Heart left ventricle (tissue), 16 donors: ENCODE measurements at regions of chr1 and their contacts with region 1.

Region 1: DNA sequence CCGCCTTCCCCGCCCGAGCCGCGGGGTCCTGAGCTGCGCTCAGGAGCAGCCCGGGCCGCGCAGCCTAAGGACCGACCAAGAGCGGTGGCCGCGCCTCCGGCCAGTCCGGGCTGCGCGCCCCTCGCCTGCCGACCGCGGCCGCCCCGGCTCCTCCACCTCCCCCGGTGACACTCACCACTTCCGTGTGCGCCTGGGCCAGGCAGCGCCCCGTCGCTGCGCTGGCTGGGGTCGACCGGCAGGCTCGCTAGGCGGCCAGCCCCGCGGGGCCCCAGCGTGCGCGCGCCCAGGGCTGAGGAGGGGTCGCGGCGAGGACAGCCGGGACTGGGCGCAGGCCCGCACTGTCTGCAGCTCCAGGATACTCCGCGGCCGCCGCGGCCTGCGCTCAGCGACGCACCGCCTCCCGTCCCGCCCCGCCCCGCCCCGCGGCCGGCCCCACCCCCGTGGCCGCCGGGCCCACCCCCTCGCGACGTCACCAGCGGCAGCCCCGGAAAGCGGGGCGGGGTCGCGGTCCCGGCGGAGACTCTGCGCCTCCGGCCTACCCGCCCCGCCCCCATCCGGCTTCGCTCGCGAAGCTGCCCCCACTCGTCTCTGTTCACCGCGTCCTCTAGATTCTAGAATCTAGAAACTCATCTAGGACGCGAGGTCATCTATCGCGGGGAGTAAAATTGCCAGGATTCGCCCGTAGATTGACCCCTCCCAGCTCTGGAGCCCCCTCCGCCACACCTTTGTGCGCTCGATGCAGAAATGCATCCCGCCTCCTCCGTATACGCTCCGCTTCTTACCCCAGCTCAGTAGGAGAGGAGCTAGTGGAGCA is at the start of gene JAK1:
- DNase-seq: peak; percentile 93 to 96 (median 94)
- ATAC-seq: peak; percentile 76 to 97 (median 94)
- H3K4me3 ChIP-seq: peak within 1 kb of the TSS; percentile 83 to 100 (median 96)
- H3K27ac ChIP-seq: peak within 1 kb of the TSS; percentile 92 to 100 (median 96)
- H3K4me1 ChIP-seq: peaks cover 0 to 46% (median 32%) of the 10 kb centered on the region in 12 donors
- H3K27me3 ChIP-seq: no peaks in the 10 kb centered on the region
- CTCF ChIP-seq: peak in 1 of 12 donors; percentile 22
- POLR2A ChIP-seq: peak; percentile 56 to 97
- total RNA-seq, gene JAK1: 85.6 to 189 (median 96.5) TPM

Region 2: DNA sequence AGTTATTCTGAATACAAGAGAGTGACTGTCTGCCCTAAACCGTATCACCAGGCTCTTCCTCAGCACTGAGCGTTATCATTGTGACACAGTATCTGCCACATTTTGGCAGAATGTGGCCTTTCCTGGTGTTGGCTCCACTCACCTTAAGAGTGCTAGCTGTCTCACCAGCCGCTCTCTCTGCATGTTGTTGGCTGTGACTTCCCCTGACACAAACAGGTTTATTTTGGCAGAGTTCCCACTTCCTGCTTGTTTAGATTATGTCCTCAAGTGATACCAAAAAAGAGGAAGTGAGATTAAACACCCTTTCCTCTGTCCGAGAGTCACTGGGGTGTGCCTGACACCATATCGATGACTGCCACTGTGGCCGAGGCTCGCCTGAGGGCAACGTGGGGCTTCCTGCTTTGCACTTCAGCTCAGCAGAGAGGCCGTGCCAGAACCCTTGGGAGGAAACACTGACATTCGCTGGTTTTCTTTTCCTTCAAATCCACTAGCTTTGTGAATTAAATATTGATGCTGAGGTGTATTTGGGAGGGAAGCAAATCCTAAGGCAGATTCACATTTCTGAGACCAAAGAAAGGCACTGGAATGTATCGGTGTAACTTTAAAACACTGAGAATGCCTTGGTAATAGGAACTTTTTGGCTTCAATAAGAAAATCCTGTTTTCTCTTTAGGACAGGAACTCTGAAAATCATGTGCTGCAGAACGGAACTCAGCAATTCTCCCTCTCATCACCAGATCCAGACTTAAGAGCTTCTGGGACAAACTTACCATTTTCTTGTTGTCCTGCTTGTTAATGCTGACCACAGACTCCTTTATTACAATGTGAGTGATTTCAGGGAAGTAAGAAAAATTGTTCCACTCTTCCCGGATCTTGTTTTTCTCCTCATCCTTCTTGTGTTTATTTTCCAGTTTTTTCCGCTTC is 102.1 kb before region 1 on chr1:
- intact Hi-C with region 1: loop called in 2 of 10 experiments (anchors 2 to 10 kb)
- DNase-seq: peak; percentile 63 to 88 (median 77)
- ATAC-seq: peak; percentile 45 to 94 (median 85)
- H3K4me3 ChIP-seq: no peak overlapping the region
- H3K27ac ChIP-seq: peak overlapping the region in 9 of 12 donors; percentile 17 to 85 (median 39)
- H3K4me1 ChIP-seq: peaks cover 0 to 28% (median 5%) of the 10 kb centered on the region in 12 donors
- H3K27me3 ChIP-seq: no peaks in the 10 kb centered on the region
- CTCF ChIP-seq: no peak
- POLR2A ChIP-seq: no peak

Region 3: GRCh38 chr1:64884261-64885040 is 81.9 kb before region 1 on chr1:
- intact Hi-C with region 1: loop called in 3 of 10 experiments (anchors 5 kb)
- DNase-seq: no peak
- ATAC-seq: no peak
- H3K4me3 ChIP-seq: no peak overlapping the region
- H3K27ac ChIP-seq: no peak overlapping the region
- H3K4me1 ChIP-seq: peaks cover 2 to 66% (median 14%) of the 10 kb centered on the region in 12 donors
- H3K27me3 ChIP-seq: no peaks in the 10 kb centered on the region
- CTCF ChIP-seq: no peak
- POLR2A ChIP-seq: no peak

Region 4: DNA sequence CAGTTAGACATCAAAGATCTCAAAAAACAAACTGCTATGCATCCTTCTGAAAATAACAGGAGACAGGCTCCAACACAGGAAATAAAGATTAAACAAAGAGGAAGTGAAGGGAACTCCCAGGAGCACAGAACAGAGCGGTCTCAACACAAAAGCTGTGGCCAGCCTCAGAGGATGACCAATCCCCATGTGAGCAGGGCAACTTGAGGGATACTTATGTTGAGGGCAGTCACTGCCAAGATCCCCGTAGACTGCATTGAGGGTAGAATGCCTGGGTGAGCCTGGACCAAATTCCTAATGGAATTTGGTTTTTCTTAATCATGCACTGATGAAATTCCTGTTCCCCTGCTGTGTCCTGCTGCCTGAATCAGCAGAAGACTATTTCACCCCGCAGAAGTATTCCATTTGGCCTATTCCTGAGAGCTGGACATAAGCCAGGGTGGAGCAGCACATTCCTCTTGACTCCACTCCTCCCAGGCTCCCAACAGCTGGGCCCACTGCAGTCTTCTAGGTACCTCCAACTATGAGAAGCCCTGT is 49.0 kb before region 1 on chr1:
- intact Hi-C with region 1: loop called in 1 of 10 experiments (anchors 2 kb)
- DNase-seq: peak in 4 of 5 donors; percentile 64 to 86 (median 74)
- ATAC-seq: peak; percentile 62 to 93 (median 88)
- H3K4me3 ChIP-seq: no peak overlapping the region
- H3K27ac ChIP-seq: peak overlapping the region in 9 of 12 donors; percentile 13 to 76 (median 31)
- H3K4me1 ChIP-seq: peaks cover 13 to 91% (median 66%) of the 10 kb centered on the region in 12 donors
- H3K27me3 ChIP-seq: no peaks in the 10 kb centered on the region
- CTCF ChIP-seq: no peak
- POLR2A ChIP-seq: no peak

Region 5: GRCh38 chr1:65067491-65068201 is 101.3 kb after region 1 on chr1:
- intact Hi-C with region 1: loop called in 3 of 10 experiments (anchors 2 to 10 kb)
- DNase-seq: peak; percentile 72 to 85 (median 81)
- ATAC-seq: peak; percentile 45 to 63 (median 58)
- H3K4me3 ChIP-seq: peak overlapping the region; percentile 71 to 98 (median 88)
- H3K27ac ChIP-seq: peak overlapping the region; percentile 95 to 100 (median 99)
- H3K4me1 ChIP-seq: peaks cover 0 to 43% (median 31%) of the 10 kb centered on the region in 12 donors
- H3K27me3 ChIP-seq: no peaks in the 10 kb centered on the region
- CTCF ChIP-seq: no peak
- POLR2A ChIP-seq: peak in 1 of 2 donors; percentile 65

Region 6: GRCh38 chr1:65213271-65214023 is 247.1 kb after region 1 on chr1:
- intact Hi-C with region 1: no loop called
- DNase-seq: no peak
- ATAC-seq: peak in 3 of 4 donors; percentile 13 to 37 (median 20)
- H3K4me3 ChIP-seq: no peak overlapping the region
- H3K27ac ChIP-seq: no peak overlapping the region
- H3K4me1 ChIP-seq: peaks cover 0 to 19% (median 11%) of the 10 kb centered on the region in 12 donors
- H3K27me3 ChIP-seq: no peaks in the 10 kb centered on the region
- CTCF ChIP-seq: no peak
- POLR2A ChIP-seq: no peak